Dendritic cell treated with granulocyte-macrophage colony-stimulating factor and Interleukin-4, amounts not matched to agents 40 ng/mL and 50 ng/mL, for 4 days (primary cell): ENCODE measurements at regions of chr4 and their contacts with region 1.

Region 1: DNA sequence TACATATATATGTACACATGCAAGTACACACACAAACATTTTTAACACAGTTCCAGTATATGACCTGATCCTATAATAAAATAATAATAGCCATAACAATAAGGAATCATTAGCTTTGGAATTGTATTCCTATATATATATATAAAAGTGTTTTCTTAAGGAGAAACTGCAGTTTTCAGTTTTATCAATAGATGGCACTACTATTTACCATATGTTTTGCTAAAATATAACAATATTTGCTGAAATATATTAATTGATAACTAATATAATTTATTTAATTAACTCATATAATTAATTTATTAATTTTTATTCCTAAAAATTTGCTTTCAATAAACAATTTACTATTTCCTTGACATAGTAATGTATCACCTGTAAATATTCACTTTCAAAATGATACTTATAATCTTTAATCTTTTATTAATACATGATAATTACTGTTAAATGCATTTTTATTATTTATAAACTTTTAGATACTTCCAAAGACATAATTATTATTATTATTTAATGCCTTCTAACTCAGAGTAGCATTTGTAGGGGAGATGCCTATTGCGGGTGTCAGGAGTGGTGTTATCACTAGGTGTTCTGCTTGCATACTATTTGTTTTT is 599.5 kb downstream of the FSTL5 start:
- H3K4me3 Mint-ChIP-seq: no peak overlapping the region
- H3K27ac Mint-ChIP-seq: no peak overlapping the region
- H3K4me1 Mint-ChIP-seq: peaks cover 4% of the 10 kb centered on the region
- H3K27me3 Mint-ChIP-seq: no peaks in the 10 kb centered on the region

Region 2: DNA sequence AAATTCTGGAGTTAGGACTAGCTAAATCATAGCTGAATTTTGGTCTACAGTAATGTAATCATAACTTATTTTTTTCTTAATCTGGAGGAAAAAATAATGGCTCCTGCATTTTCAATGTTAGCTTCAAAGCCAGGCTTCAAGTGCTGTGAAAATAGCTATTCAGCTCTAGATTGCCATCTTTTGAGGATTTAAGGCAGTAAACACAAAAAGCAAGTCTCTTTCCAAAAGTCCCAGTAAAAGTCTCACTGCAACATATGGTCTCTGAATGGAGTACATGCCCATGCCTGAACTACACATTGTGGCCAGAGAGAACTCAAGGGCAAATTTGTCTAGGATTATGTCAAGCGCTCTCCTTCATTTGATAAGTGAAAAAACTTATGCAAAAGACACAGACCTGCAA is 121.4 kb before region 1 on chr4:
- intact Hi-C with region 1: no loop called
- H3K4me3 Mint-ChIP-seq: no peak overlapping the region
- H3K27ac Mint-ChIP-seq: no peak overlapping the region
- H3K4me1 Mint-ChIP-seq: no peaks in the 10 kb centered on the region
- H3K27me3 Mint-ChIP-seq: no peaks in the 10 kb centered on the region

Region 3: DNA sequence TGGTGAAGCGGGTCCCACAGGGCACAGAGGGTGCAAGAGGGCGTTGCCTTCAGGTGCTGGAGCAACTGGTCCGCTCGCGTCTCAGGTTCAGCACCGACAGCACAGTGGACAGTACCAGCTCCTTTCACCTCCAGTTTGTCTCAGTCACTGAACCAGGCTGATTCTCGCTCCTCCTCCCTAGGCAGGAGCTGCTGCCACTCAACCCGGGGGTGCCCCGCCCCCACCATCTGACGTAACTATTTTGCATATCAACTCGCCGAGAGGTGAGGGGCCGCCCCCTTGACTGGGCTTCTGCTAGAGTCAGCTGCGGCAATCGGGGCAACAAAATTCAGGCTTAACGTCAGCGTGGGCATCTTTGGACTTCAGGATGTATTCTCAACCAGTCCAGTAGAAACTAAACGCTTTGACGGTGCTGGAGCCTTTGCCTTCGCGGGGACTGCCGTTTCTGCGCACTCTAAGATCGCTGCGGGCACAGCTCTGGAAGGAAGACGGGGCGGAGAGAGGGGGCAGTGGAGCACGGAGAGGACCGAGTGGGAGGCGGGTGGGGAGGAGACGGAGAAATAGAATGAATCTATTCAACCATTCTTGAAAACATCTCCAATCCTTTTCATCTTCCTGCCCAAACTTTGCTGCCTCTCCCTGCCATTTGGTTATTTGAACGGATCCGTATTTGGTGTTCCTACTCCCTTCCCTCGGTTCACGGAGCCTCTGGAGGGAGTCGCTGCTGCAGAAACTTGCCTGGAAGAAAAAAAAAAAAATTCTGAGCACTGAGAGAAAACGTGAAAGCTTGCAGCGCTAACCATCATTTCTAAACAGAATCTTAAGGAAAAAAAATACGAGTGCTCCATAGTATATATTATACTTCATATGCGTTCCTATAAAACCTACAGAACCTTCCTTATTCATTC is 599.8 kb after region 1 on chr4 and contains the start of gene FSTL5:
- intact Hi-C with region 1: loop called (anchors 10 kb)
- H3K4me3 Mint-ChIP-seq: peak within 1 kb of the TSS; percentile 30
- H3K27ac Mint-ChIP-seq: no peak within 1 kb of the TSS
- H3K4me1 Mint-ChIP-seq: peaks cover 8% of the 10 kb centered on the region
- H3K27me3 Mint-ChIP-seq: peaks cover 19% of the 10 kb centered on the region